ENCODE measurements at regions of chr2 and their contacts with region 1.

Region 1: DNA sequence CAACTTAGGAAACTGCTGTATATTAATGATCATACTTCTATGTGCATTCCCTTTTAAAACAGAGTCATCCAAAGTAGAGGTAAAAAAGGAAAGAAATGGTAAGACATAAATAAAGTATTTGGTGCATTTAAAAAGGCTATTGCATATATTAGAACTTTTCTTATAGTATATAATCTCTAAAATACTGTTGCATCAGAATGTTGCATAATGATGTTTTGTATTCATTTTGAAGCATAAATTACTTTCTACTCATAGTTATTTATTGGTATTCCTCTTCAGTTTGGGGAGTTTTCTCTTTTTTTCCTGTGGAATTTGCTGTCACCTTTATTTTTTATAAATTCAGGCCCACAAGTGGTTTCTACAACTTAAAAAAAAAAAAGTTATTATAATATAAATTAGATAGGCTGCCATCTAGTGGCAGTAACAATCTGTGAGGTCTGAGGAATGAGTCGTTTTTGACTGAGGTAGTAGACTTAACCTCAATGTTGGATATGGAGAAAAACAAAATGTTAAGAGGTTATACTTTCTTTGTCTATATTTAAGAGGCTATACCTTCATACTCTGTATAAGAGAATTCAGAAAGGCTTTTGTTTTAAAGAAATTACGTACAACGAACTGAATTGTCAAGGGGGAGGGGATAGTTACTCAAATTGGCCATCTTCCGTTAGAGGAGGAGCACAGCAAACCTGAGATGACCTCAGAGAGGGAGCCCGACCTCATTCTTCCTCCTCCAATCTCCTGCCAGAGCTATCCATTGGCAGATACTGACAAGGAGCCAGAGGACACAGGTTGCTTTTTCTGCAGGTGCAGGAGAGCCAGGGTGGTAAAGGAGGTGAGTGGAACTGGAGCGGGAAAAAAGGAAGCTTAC is 23.8 kb downstream of the ANKAR start:
- DNase-seq: no peak
- H3K4me3 ChIP-seq: no peak overlapping the region
- CTCF ChIP-seq: peak; percentile 11

Region 2: GRCh38 chr2:189674374-189675112 is 23.7 kb before region 1 on chr2 and contains the start of gene ANKAR:
- CTCF ChIA-PET with region 1: interaction called, 55 read pairs
- POLR2A ChIA-PET with region 1: no interaction called
- DNase-seq: peak; percentile 24
- H3K4me3 ChIP-seq: peak within 1 kb of the TSS; percentile 77
- CTCF ChIP-seq: peak; percentile 88

Region 3: DNA sequence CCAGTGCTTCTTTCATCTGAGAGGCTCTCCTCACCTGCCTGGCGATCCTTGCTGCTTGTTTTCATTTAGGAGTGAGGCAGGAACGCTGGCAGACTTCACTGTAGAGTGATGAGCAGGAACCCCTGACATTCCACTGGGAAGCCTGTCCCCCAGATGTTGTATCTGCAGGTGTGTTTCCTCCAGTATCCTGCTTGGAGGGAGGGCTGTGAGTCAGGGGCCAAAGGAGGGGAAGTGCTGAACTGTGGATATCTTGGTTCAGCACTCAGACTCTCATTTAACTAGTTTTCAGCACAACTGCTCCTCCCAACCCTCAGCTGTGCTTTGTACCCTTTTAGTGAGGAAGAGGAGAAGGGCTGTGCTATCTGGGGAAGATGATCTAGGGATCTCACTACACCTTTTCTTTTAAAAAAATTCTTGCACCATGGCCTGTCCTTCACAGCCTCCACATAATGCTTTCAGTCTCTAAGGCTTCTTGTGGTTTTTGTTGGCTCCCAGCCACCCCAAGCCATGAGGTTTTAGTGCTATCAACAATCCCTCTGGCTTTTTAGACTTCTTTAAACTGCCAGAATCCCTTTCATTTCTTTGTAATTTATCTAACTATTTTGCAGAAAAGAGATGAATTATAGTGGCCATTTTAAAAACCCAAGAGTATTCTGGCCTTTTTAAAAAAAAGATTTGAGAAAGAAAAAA is 12.6 kb before region 1 on chr2:
- CTCF ChIA-PET with region 1: interaction called, 45 read pairs
- POLR2A ChIA-PET with region 1: no interaction called
- DNase-seq: peak; percentile 14
- H3K4me3 ChIP-seq: no peak overlapping the region
- CTCF ChIP-seq: no peak

Region 4: GRCh38 chr2:189709501-189710221 is 11.4 kb after region 1 on chr2:
- CTCF ChIA-PET with region 1: interaction called, 13 read pairs
- POLR2A ChIA-PET with region 1: no interaction called
- DNase-seq: no peak
- H3K4me3 ChIP-seq: no peak overlapping the region
- CTCF ChIP-seq: no peak

Measured in AG04449 (cell line).